IMR-90 (cell line): ENCODE measurements at regions of chr4 and their contacts with region 1.

Region 1: DNA sequence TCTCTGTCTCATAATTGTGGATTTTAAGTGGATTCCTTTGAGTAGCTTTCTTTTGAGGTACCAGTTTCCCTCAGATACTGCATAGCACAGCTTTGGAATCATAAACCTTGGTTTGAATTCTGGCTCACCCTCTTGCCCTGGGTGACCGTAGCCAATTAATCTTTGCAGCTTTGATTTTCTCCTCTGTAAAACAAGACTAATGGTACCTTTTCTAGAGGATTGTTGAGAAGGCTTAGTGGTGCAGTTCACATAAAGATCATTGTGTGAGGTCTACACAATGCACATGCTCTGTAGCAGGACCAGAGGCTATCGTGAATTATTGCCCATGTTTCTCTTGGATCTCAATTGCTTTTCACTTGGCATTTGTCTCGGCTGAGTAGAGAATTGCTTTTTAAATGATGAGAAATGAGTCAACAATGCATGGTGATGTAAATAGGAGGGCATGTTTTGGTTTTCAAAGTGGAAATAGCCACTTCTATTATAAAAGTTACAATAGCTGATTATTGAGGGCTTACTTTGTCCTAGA is 47.9 kb downstream of the TMEM131L start:
- DNase-seq: peak; percentile 66
- ATAC-seq: peak; percentile 59
- H3K4me3 ChIP-seq: no peak overlapping the region
- H3K27ac ChIP-seq: no peak overlapping the region
- H3K4me1 ChIP-seq: peaks cover 5% of the 10 kb centered on the region; the same call in 1 of the 2 replicates
- H3K27me3 ChIP-seq: no peaks in the 10 kb centered on the region
- CTCF ChIP-seq: no peak
- POLR2A ChIP-seq: no peak
- RAD21 ChIP-seq: no peak

Region 2: DNA sequence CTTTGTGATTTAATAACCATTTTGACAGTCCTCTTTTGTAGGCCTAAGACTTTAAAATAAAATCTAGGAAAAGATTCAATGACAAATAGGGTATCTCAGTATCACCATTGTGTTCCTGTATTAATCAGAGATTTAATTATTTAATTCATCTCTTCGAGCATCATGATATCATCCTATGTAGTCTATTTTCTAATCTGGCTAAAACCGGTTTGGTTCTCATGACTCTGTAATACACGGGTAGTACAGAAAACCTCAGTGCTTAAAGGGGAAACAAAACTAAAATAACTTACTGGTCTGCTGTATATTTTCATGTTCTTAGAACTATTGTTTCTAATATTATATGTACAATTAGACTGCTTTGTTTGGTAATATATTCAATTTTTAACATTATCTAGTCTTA is 954.4 kb before region 1 on chr4:
- CTCF ChIA-PET with region 1: no interaction called
- POLR2A ChIA-PET with region 1: no interaction called
- dilution Hi-C with region 1: no loop called
- in situ Hi-C with region 1: no loop called
- intact Hi-C with region 1: no loop called
- DNase-seq: no peak
- ATAC-seq: no peak
- H3K4me3 ChIP-seq: no peak overlapping the region
- H3K27ac ChIP-seq: no peak overlapping the region
- H3K4me1 ChIP-seq: no peaks in the 10 kb centered on the region
- H3K27me3 ChIP-seq: peaks cover 2% of the 10 kb centered on the region; the same call in 1 of the 2 replicates
- CTCF ChIP-seq: no peak
- POLR2A ChIP-seq: no peak
- RAD21 ChIP-seq: no peak

Region 3: GRCh38 chr4:153458969-153459368 is 55.1 kb before region 1 on chr4:
- CTCF ChIA-PET with region 1: no interaction called
- POLR2A ChIA-PET with region 1: no interaction called
- dilution Hi-C with region 1: no loop called
- in situ Hi-C with region 1: no loop called
- intact Hi-C with region 1: no loop called
- DNase-seq: no peak
- ATAC-seq: no peak
- H3K4me3 ChIP-seq: no peak overlapping the region
- H3K27ac ChIP-seq: no peak overlapping the region
- H3K4me1 ChIP-seq: no peaks in the 10 kb centered on the region
- H3K27me3 ChIP-seq: no peaks in the 10 kb centered on the region
- CTCF ChIP-seq: no peak
- POLR2A ChIP-seq: no peak
- RAD21 ChIP-seq: no peak

Region 4: DNA sequence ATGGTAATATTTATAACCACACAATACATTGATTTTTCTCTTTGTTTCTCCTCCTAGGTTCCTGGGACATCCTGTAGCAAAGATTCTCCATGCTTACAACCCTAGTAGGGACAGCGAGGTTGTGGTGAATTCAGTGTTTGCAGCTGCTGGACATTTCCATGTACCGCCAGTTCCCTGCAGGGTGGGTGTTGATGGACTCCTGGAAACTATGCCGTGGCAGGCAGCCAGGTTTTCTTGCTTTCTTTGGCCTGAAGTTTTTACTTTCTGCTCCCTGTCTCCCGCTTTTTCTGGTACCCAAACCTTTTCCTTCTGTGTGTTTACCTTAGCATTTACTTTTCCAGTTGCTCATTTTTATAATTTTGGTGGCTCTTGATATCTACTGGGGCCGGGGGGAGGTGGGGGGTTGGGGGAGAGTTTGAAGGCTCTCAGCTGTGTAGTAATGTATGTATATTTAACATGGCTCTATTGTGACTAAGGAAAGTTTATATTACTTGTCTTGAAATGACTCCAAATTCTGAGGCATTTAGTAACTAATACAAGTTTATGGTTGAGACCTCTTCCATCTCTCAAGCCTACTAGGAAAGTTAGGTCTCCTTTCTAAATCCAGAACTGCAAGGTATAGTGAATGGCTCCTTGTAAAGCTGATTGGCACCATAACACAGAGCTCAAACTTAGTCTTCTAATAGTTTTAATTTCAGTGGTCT is 41.8 kb after region 1 on chr4:
- CTCF ChIA-PET with region 1: no interaction called
- POLR2A ChIA-PET with region 1: no interaction called
- dilution Hi-C with region 1: no loop called
- in situ Hi-C with region 1: no loop called
- intact Hi-C with region 1: loop called (anchors 1 kb)
- DNase-seq: peak; percentile 84
- ATAC-seq: peak; percentile 89
- H3K4me3 ChIP-seq: peak overlapping the region; percentile 12; the same call in 1 of the 2 replicates
- H3K27ac ChIP-seq: peak overlapping the region; percentile 18
- H3K4me1 ChIP-seq: peaks cover 7% of the 10 kb centered on the region
- H3K27me3 ChIP-seq: no peaks in the 10 kb centered on the region
- CTCF ChIP-seq: no peak
- POLR2A ChIP-seq: no peak
- RAD21 ChIP-seq: no peak